Activated naive CD4-positive, alpha-beta T cell treated with anti-CD3 and anti-CD28 coated beads for 36 hours (primary cell): ENCODE measurements at regions of chr10 and their contacts with region 1.

Region 1: GRCh38 chr10:123008439-123009205 is at the starts of genes ACADSB and IKZF5:
- DNase-seq: peak; percentile 98
- H3K4me3 Mint-ChIP-seq: peak within 1 kb of the TSS; percentile 100
- H3K27ac Mint-ChIP-seq: peak within 1 kb of the TSS; percentile 98
- H3K4me1 Mint-ChIP-seq: peaks cover 34% of the 10 kb centered on the region
- H3K27me3 Mint-ChIP-seq: no peaks in the 10 kb centered on the region
- total RNA-seq, gene ACADSB: 19.8 to 21.8 TPM
- total RNA-seq, gene IKZF5: 15.3 to 16.2 TPM

Region 2: DNA sequence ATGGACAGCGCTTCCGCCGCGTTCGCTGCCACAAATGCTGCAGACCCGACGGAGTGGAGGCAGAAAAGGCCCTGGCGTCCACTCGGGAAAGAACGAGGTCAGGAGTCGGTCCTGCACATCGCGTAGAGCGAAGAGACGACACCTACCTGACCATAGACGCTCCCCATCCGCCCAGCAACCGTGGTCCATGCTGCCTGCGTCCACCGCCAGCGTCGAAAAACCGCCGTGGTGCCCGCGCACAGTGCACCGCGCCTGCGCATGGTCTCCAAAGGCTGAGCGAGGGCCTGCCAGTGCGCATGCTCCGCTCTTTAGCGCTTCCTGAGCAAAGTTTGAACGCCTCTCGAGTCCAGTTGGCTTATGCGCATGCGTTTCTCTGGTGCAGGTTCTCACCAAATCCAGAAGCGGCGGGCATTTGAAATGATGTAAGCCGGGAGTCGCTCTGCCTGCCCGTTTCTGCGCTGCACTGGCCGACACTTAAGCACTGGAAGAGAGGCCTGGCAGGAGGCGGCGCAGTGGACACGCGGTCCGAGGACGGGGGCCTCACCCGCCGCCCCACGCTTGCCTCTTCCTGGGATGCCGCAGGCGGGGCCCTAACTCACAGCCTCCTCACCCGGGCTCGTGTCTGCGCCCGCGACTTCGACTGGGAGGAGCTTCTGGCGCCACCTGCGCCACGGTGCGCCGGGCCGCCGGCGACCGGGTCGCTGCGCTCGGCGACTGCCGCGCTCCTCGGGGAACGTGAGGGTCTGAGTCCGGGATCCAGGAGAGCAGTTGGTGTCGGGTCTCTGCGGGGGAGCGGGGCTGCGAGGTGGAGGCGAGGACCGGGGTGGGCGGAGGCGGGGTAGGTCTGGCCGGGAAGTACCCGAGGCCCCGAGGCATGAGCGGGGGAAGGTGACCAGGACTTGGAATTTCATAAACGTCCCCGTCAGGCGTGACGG is 129.0 kb before region 1 on chr10 and contains the start of gene FAM24B:
- CTCF ChIA-PET with region 1: no interaction called
- intact Hi-C with region 1: loop called (anchors 1 kb)
- DNase-seq: peak; percentile 95
- H3K4me3 Mint-ChIP-seq: peak within 1 kb of the TSS; percentile 82
- H3K27ac Mint-ChIP-seq: peak within 1 kb of the TSS; percentile 90
- H3K4me1 Mint-ChIP-seq: peaks cover 45% of the 10 kb centered on the region
- H3K27me3 Mint-ChIP-seq: peaks cover 3% of the 10 kb centered on the region
- total RNA-seq, gene FAM24B: 8.0 to 8.1 TPM

Region 3: DNA sequence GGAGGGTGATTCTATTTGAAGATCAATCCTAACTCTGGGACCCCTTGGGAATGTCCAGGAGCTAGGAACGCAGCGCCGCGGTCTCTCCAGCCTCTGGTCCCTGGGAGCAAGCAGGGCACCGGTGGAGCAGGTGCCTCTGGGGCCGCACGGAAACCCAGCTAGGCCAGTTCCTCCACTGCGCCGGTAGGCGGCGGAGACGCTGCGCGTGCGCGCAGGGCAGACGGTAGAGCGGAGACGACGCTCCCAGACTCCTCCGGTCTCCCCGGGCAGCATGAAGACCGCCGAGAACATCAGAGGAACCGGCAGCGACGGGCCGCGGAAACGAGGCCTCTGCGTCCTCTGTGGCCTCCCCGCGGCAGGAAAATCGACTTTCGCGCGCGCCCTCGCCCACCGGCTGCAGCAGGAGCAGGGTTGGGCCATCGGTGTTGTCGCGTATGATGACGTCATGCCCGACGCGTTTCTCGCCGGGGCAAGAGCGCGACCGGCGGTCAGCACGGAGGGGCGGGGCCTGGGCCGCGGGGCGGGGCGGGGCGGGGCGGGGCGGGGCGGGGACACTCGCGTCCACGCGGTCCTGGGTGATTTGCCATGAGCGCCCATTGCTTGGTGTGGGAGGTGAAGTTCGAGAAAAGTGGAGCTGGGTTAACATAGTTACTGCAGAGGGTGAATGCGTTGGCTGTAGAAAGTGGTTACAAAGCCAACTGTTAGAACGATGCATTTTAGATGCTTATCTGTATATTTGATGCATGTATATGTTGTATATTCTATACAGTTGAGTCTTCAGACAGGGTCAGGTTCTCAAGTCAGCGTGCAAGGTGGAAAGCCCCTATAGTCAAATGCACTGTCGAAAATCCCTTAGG is 28.2 kb before region 1 on chr10 and contains the start of gene PSTK:
- CTCF ChIA-PET with region 1: interaction called, 9 read pairs
- intact Hi-C with region 1: loop called (anchors 1 kb)
- DNase-seq: peak; percentile 90
- H3K4me3 Mint-ChIP-seq: peak within 1 kb of the TSS; percentile 87
- H3K27ac Mint-ChIP-seq: peak within 1 kb of the TSS; percentile 92
- H3K4me1 Mint-ChIP-seq: peaks cover 17% of the 10 kb centered on the region
- H3K27me3 Mint-ChIP-seq: no peaks in the 10 kb centered on the region
- total RNA-seq, gene PSTK: 3.9 to 4.2 TPM

Region 4: GRCh38 chr10:123287594-123288247 is 279.1 kb after region 1 on chr10:
- CTCF ChIA-PET with region 1: no interaction called
- intact Hi-C with region 1: loop called (anchors 2 kb)
- DNase-seq: peak; percentile 78
- H3K4me3 Mint-ChIP-seq: no peak overlapping the region
- H3K27ac Mint-ChIP-seq: peak overlapping the region; percentile 78
- H3K4me1 Mint-ChIP-seq: peaks cover 19% of the 10 kb centered on the region
- H3K27me3 Mint-ChIP-seq: peaks cover 2% of the 10 kb centered on the region

Region 5: GRCh38 chr10:123380497-123381085 is 372.0 kb after region 1 on chr10:
- CTCF ChIA-PET with region 1: no interaction called
- intact Hi-C with region 1: no loop called
- DNase-seq: no peak
- H3K4me3 Mint-ChIP-seq: no peak overlapping the region
- H3K27ac Mint-ChIP-seq: no peak overlapping the region
- H3K4me1 Mint-ChIP-seq: no peaks in the 10 kb centered on the region
- H3K27me3 Mint-ChIP-seq: no peaks in the 10 kb centered on the region